ENCODE measurements at regions of chr7 and their contacts with region 1.

Region 1: GRCh38 chr7:44240983-44241510 is 40.3 kb downstream of the YKT6 start:
- DNase-seq: peak; percentile 82
- H3K4me3 Mint-ChIP-seq: no peak overlapping the region
- H3K27ac Mint-ChIP-seq: peak overlapping the region; percentile 30
- H3K4me1 Mint-ChIP-seq: no peaks in the 10 kb centered on the region
- H3K27me3 Mint-ChIP-seq: no peaks in the 10 kb centered on the region

Region 2: DNA sequence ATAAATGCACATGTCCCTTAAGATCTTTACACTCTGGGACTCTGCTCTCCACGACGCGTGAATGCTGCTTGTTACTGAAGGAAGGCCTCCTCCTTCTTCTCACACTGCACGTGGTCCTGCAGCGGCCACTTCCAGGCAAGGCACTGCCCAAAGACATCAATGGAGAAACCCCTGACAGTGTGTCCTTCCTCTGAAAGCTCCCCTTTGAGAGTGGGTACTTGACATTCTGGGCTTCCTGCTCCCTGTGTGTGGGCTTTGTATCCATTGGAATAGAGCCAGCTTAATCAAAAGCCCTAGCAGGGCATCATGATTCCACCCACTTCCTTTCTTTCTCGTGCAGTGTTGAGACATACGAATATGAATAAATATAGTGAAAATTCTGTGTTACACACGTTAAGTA is 727.8 kb before region 1 on chr7:
- CTCF ChIA-PET with region 1: no interaction called
- intact Hi-C with region 1: no loop called
- DNase-seq: no peak
- H3K4me3 Mint-ChIP-seq: no peak overlapping the region
- H3K27ac Mint-ChIP-seq: no peak overlapping the region
- H3K4me1 Mint-ChIP-seq: peaks cover 3% of the 10 kb centered on the region
- H3K27me3 Mint-ChIP-seq: peaks cover 7% of the 10 kb centered on the region

Region 3: GRCh38 chr7:43942997-43943704 is 297.9 kb before region 1 on chr7:
- CTCF ChIA-PET with region 1: no interaction called
- intact Hi-C with region 1: no loop called
- DNase-seq: no peak
- H3K4me3 Mint-ChIP-seq: no peak overlapping the region
- H3K27ac Mint-ChIP-seq: no peak overlapping the region
- H3K4me1 Mint-ChIP-seq: no peaks in the 10 kb centered on the region
- H3K27me3 Mint-ChIP-seq: no peaks in the 10 kb centered on the region

Region 4: GRCh38 chr7:44257618-44258422 is 16.8 kb after region 1 on chr7:
- CTCF ChIA-PET with region 1: interaction called, 15 read pairs
- intact Hi-C with region 1: no loop called
- DNase-seq: peak; percentile 90
- H3K4me3 Mint-ChIP-seq: peak overlapping the region; percentile 17
- H3K27ac Mint-ChIP-seq: peak overlapping the region; percentile 94
- H3K4me1 Mint-ChIP-seq: peaks cover 29% of the 10 kb centered on the region
- H3K27me3 Mint-ChIP-seq: no peaks in the 10 kb centered on the region

Region 5: DNA sequence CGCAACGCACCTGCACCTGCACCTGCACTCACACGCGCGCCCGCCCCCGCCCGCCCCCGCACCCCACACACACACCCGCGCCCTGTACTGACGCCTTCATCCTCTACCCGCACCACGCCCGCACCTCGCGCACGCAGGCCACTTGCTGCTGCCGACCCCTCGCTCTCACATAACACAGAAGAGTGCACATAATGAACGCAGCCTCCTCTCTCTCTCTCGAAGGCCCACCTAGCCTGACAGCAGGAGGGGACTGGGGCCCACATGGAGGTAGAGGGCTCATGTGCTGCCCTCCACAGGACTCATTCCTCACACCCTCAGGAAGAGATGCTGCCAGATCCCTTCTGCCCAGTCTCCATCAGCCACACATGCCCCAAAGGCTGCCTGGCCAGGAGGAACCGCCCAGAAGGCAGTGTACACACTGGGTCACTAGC is 84.8 kb after region 1 on chr7:
- CTCF ChIA-PET with region 1: no interaction called
- intact Hi-C with region 1: no loop called
- DNase-seq: no peak
- H3K4me3 Mint-ChIP-seq: peak overlapping the region; percentile 78
- H3K27ac Mint-ChIP-seq: no peak overlapping the region
- H3K4me1 Mint-ChIP-seq: peaks cover 7% of the 10 kb centered on the region
- H3K27me3 Mint-ChIP-seq: peaks cover 26% of the 10 kb centered on the region